ENCODE measurements at regions of chr10 and their contacts with region 1.

Region 1: GRCh38 chr10:119859420-119860258 is 13.0 kb downstream of the MCMBP start:
- DNase-seq: no peak
- H3K4me3 ChIP-seq: no peak overlapping the region
- H3K27ac ChIP-seq: peak overlapping the region; percentile 19; the same call in 1 of the 2 replicates
- H3K4me1 ChIP-seq: no peaks in the 10 kb centered on the region
- H3K27me3 ChIP-seq: no peaks in the 10 kb centered on the region
- CTCF ChIP-seq: peak; percentile 76

Region 2: GRCh38 chr10:119750391-119751230 is 109.0 kb before region 1 on chr10:
- CTCF ChIA-PET with region 1: interaction called, 4 read pairs
- POLR2A ChIA-PET with region 1: no interaction called
- intact Hi-C with region 1: loop called (anchors 1 kb)
- DNase-seq: peak; percentile 44 to 59
- H3K4me3 ChIP-seq: no peak overlapping the region
- H3K27ac ChIP-seq: no peak overlapping the region
- H3K4me1 ChIP-seq: no peaks in the 10 kb centered on the region
- H3K27me3 ChIP-seq: no peaks in the 10 kb centered on the region
- CTCF ChIP-seq: peak; percentile 79

Region 3: GRCh38 chr10:119769886-119770285 is 89.8 kb before region 1 on chr10:
- CTCF ChIA-PET with region 1: interaction called, 11 read pairs
- POLR2A ChIA-PET with region 1: no interaction called
- intact Hi-C with region 1: no loop called
- DNase-seq: peak in 1 of 2 experiments; percentile 56
- H3K4me3 ChIP-seq: no peak overlapping the region
- H3K27ac ChIP-seq: no peak overlapping the region
- H3K4me1 ChIP-seq: peaks cover 11% of the 10 kb centered on the region; the same call in 1 of the 2 replicates
- H3K27me3 ChIP-seq: no peaks in the 10 kb centered on the region
- CTCF ChIP-seq: no peak

Measured in PC-9 (cell line).